Colonic mucosa (tissue), 4 donors: ENCODE measurements at regions of chr1 and their contacts with region 1.

Region 1: DNA sequence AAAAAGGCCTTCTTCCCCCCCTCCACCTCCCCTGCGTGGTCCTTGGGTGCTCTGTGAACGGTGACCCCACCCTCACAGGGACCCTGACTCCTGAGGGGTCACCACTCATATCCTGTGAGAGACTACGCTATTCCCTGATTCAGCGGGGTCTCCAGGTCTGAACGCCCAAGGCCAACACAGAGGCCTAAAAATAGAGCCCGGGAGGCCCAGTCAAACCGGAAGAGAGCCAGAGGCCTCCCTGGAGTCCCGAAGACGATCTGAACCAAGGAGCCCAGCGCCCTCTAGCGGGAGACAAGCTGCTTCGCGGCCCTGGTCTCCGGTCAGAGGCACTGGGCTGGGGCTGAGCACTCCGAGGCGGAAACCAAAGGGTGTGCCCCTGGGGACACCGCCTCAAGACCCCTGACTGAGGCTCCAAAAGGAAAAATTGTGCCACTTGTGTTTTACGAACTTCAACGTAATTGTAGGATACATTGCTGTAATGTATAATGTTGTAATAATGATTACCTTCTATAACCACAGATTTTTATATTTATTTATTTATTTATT is 42.4 kb upstream of the PSEN2 start:
- DNase-seq: peak; percentile 97
- H3K4me3 ChIP-seq: no peak overlapping the region
- H3K27ac ChIP-seq: peak overlapping the region; percentile 34
- H3K4me1 ChIP-seq: peaks cover 4% of the 10 kb centered on the region
- H3K27me3 ChIP-seq: no peaks in the 10 kb centered on the region
- CTCF ChIP-seq: peak; percentile 97

Region 2: GRCh38 chr1:226424228-226425003 is 403.6 kb before region 1 on chr1:
- intact Hi-C with region 1: loop called (anchors 10 kb)
- DNase-seq: no peak
- H3K4me3 ChIP-seq: no peak overlapping the region
- H3K27ac ChIP-seq: no peak overlapping the region
- H3K4me1 ChIP-seq: no peaks in the 10 kb centered on the region
- H3K27me3 ChIP-seq: no peaks in the 10 kb centered on the region
- CTCF ChIP-seq: peak; percentile 59

Region 3: GRCh38 chr1:226634166-226634588 is 193.9 kb before region 1 on chr1:
- intact Hi-C with region 1: loop called (anchors 2 kb)
- DNase-seq: peak; percentile 81
- H3K4me3 ChIP-seq: no peak overlapping the region
- H3K27ac ChIP-seq: no peak overlapping the region
- H3K4me1 ChIP-seq: peaks cover 8% of the 10 kb centered on the region
- H3K27me3 ChIP-seq: no peaks in the 10 kb centered on the region
- CTCF ChIP-seq: peak; percentile 87

Region 4: GRCh38 chr1:226736908-226737818 is 90.9 kb before region 1 on chr1:
- intact Hi-C with region 1: loop called (anchors 10 kb)
- DNase-seq: peak; percentile 43
- H3K4me3 ChIP-seq: peak overlapping the region; percentile 77
- H3K27ac ChIP-seq: peak overlapping the region; percentile 79
- H3K4me1 ChIP-seq: no peaks in the 10 kb centered on the region
- H3K27me3 ChIP-seq: no peaks in the 10 kb centered on the region
- CTCF ChIP-seq: no peak